ENCODE measurements at regions of chr10 and their contacts with region 1.

Region 1: DNA sequence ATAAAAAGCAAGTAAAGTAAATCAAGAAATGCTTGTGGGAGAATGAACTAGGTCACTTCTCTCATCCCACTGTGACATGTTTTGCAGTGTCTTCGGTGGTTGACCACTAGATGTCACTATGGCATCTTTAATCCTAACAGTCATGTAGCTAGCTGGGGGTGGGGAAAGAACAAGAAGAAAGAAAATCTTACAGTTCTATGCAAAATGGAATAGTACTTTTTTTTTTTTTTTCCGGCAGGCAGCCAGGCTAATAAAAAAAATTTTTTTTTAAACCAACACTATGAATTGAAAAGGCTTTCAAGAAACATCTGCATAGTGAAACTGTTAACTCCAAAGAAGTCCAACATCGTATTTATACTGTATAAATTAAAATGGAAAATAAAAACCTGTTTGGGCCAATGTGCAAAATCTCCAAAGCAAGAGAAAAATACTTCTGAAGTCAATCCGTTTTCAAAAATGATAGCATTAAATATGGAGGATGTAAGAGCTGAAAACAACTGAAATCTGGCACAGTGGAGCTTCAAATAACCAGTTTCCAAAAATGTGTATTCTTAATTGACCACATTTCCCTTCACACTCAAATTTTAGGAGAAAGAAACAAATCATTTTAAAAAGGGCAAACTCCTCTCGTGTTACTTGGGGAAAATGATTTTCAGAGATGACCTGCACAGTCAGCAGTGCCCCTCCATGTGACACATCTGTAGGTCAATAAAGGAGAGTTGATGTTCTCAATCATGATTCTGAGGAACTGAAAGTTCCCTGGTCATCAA is 38.5 kb downstream of the CDK1 start:
- DNase-seq: peak; percentile 55
- H3K4me3 Mint-ChIP-seq: no peak overlapping the region
- H3K27ac Mint-ChIP-seq: no peak overlapping the region
- H3K4me1 Mint-ChIP-seq: no peaks in the 10 kb centered on the region
- H3K27me3 Mint-ChIP-seq: no peaks in the 10 kb centered on the region
- CTCF ChIP-seq: peak; percentile 83

Region 2: DNA sequence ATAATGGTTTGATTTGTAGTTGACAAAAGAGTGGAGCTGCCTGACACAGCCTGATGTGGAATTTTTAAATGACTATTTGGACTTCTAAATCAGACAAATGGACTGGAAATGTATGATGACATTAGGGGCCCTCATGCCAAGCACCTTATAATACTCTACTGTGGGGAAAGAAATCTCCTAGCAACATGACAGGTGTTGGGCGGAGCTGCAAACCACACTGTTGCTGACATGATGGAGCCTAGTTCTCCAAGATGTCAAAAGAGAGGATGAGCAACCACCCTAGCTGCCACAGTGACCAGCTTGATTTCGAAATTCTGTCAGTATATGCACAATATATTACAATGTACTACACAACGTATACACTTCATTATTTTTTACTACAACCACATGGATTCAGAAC is 61.4 kb after region 1 on chr10:
- CTCF ChIA-PET with region 1: no interaction called
- intact Hi-C with region 1: no loop called
- DNase-seq: no peak
- H3K4me3 Mint-ChIP-seq: no peak overlapping the region
- H3K27ac Mint-ChIP-seq: no peak overlapping the region
- H3K4me1 Mint-ChIP-seq: no peaks in the 10 kb centered on the region
- H3K27me3 Mint-ChIP-seq: no peaks in the 10 kb centered on the region
- CTCF ChIP-seq: no peak

Region 3: DNA sequence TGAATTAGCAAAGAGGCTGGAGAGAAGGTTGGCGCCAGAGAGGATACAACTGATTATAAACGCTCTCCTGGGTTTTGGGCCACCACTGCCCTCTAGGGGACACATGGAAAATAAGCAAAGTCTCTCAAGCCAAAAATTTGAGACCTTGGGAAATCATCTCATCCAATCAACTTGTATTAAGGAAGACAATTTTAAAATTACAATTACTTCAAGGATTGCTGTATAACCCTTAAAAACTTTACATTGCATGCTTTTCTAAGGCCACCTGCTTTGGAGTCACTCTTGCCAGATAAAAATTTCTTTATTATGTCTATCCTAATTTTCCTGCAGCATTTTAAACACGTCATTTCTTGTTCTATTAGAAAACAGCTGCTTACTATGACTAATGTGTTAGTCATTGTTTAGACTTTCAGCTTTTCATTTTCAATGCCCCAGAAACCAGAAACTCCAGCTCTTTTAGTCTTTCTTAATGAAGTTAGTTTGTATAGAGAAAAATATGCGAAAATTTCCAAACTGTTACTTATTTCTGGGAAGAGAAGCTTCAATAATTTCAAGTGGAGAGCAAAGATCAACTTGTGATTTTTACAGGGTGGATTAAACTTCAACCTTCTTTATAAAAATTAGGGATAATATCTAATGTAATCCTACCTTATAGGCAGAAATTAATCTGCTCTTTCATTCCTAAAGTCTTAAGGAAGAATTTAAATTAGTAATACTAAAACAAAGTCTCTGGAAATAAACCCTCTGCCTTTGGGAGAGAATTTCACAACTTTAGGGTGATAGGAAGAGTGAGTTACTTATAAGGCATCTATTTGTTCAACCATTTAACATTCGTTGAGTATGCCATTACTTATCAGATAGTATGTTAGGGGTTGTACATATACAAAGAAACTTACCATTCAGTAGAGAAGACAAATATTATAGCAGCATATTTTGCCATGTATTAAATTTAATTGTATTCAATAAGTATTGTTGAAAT is 147.7 kb after region 1 on chr10:
- CTCF ChIA-PET with region 1: interaction called, 5 read pairs
- intact Hi-C with region 1: loop called (anchors 1 kb)
- DNase-seq: peak; percentile 79
- H3K4me3 Mint-ChIP-seq: peak overlapping the region; percentile 35
- H3K27ac Mint-ChIP-seq: peak overlapping the region; percentile 84
- H3K4me1 Mint-ChIP-seq: peaks cover 40% of the 10 kb centered on the region
- H3K27me3 Mint-ChIP-seq: no peaks in the 10 kb centered on the region
- CTCF ChIP-seq: peak; percentile 82

Region 4: GRCh38 chr10:61197057-61197456 is 380.2 kb after region 1 on chr10:
- CTCF ChIA-PET with region 1: no interaction called
- intact Hi-C with region 1: loop called (anchors 10 kb)
- DNase-seq: no peak
- H3K4me3 Mint-ChIP-seq: no peak overlapping the region
- H3K27ac Mint-ChIP-seq: no peak overlapping the region
- H3K4me1 Mint-ChIP-seq: no peaks in the 10 kb centered on the region
- H3K27me3 Mint-ChIP-seq: no peaks in the 10 kb centered on the region
- CTCF ChIP-seq: no peak

Region 5: DNA sequence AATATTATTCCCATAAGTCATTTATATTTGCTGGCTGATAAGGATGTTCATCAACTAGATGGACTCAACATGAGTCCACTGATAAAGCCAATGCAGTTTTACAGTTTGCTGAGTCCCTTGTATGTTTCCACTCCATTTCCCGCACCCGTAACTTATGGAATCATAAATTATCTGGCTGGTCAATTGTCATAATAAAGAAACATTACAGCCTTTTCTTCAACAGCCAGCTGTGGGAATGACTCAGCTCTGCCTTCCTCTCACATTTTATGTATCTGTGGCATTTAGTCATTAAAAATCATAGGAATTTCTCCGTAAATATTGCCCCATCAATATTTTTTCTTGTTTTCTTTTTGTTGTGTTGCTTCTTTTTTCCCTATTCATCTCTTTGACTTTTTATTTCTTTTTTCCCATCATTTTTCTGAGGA is 658.6 kb after region 1 on chr10:
- CTCF ChIA-PET with region 1: no interaction called
- intact Hi-C with region 1: loop called (anchors 10 kb)
- DNase-seq: no peak
- H3K4me3 Mint-ChIP-seq: no peak overlapping the region
- H3K27ac Mint-ChIP-seq: no peak overlapping the region
- H3K4me1 Mint-ChIP-seq: no peaks in the 10 kb centered on the region
- H3K27me3 Mint-ChIP-seq: peaks cover 2% of the 10 kb centered on the region
- CTCF ChIP-seq: no peak

Region 6: DNA sequence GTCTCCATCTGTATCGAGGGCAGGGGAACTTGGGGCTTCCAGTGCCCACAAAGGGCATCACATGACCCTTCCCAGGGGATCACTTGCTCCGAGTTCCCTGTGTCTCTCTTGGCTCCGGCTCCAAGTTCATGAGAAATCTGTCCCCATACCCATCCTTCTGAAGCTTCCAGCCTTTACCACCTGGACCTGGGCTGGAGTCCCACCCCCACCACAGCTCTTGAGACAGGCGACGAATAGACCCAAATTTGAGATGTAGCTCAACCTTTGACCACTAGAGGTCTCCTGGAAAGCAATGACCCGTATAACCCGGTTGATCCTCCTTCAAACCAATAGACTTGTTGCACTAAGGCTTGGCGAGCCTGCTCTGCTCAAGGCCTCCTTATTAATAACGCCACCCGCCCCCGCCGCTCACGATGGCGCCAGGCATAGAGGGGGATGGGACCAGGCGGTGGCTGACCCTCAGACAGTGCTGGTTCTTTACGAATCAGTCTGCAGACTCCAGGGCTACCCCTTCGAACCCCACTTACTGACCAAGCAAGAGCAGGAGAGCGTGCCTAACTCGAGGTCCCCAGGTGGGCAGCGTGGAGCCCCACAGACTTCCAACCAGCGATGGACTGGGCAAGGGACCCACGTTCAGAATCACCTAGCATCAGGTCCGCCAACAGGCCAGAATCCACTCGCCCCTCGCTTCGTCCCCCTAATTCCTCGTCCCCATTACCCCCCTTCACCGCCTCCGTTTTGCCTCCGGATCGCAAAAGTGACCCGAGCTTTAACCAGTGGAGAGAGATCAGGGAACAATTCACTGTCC is 1080.2 kb after region 1 on chr10:
- CTCF ChIA-PET with region 1: no interaction called
- intact Hi-C with region 1: loop called (anchors 10 kb)
- DNase-seq: peak; percentile 71
- H3K4me3 Mint-ChIP-seq: peak overlapping the region; percentile 42
- H3K27ac Mint-ChIP-seq: no peak overlapping the region
- H3K4me1 Mint-ChIP-seq: peaks cover 37% of the 10 kb centered on the region
- H3K27me3 Mint-ChIP-seq: no peaks in the 10 kb centered on the region
- CTCF ChIP-seq: peak; percentile 75